Mammary epithelial cell (primary cell): ENCODE measurements at regions of chr13 and their contacts with region 1.

Region 1: GRCh38 chr13:91017031-91017668 is 330.3 kb upstream of the MIR17HG start:
- DNase-seq: peak; percentile 42
- H3K4me3 ChIP-seq: no peak overlapping the region
- H3K27ac ChIP-seq: no peak overlapping the region
- H3K4me1 ChIP-seq: no peaks in the 10 kb centered on the region
- H3K27me3 ChIP-seq: no peaks in the 10 kb centered on the region
- CTCF ChIP-seq: peak; percentile 60 to 80

Region 2: GRCh38 chr13:90883592-90883991 is 133.6 kb before region 1 on chr13:
- CTCF ChIA-PET with region 1: no interaction called
- dilution Hi-C with region 1: no loop called
- in situ Hi-C with region 1: loop called (anchors 10 to 25 kb)
- intact Hi-C with region 1: loop called (anchors 1 kb)
- DNase-seq: no peak
- H3K4me3 ChIP-seq: no peak overlapping the region
- H3K27ac ChIP-seq: no peak overlapping the region
- H3K4me1 ChIP-seq: no peaks in the 10 kb centered on the region
- H3K27me3 ChIP-seq: no peaks in the 10 kb centered on the region
- CTCF ChIP-seq: peak in 1 of 2 donors; percentile 22

Region 3: GRCh38 chr13:90889906-90890834 is 127.0 kb before region 1 on chr13:
- CTCF ChIA-PET with region 1: no interaction called
- dilution Hi-C with region 1: no loop called
- in situ Hi-C with region 1: loop called (anchors 10 to 25 kb)
- intact Hi-C with region 1: no loop called
- DNase-seq: no peak
- H3K4me3 ChIP-seq: no peak overlapping the region
- H3K27ac ChIP-seq: no peak overlapping the region
- H3K4me1 ChIP-seq: no peaks in the 10 kb centered on the region
- H3K27me3 ChIP-seq: peaks cover 5% of the 10 kb centered on the region
- CTCF ChIP-seq: no peak